Left cardiac atrium (tissue), 4 donors: ENCODE measurements at regions of chr1 and their contacts with region 1.

Region 1: GRCh38 chr1:180851995-180852887 is 60.5 kb upstream of the KIAA1614 start:
- DNase-seq: no peak
- ATAC-seq: no peak

Region 2: GRCh38 chr1:180415985-180416633 is 436.1 kb before region 1 on chr1:
- intact Hi-C with region 1: no loop called
- DNase-seq: no peak
- ATAC-seq: peak in 1 of 2 donors; percentile 34

Region 3: DNA sequence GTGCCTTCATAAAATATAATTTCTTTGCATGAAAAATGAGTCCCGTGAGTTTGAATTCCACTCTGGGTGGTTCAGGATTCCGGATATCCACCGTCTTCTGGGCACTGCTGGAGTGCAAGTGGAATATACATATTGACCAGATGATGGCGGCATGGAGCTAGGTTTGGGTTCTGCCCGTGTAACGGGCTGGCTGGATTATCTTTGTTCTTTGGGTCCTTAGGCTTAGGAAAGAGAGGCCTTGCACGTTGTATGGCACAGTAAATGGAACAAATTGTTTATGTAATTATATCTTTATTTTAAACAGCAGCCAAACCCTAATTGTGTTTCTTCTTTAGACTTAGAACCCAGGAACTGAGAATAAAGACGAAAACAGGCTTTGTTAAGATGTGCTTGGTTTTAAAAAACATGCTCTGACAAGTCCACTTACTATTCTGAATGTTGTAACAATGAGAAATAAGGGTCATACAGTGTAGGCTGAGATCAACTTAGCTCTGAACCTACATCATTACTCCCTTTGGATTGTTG is 336.3 kb before region 1 on chr1:
- intact Hi-C with region 1: loop called in 1 of 2 experiments (anchors 10 kb)
- DNase-seq: peak; percentile 58
- ATAC-seq: peak; percentile 95 to 96

Region 4: GRCh38 chr1:180631766-180632325 is 220.4 kb before region 1 on chr1 and contains the start of gene XPR1:
- intact Hi-C with region 1: loop called in 1 of 2 experiments (anchors 10 kb)
- DNase-seq: peak; percentile 98
- ATAC-seq: peak; percentile 99 to 100
- total RNA-seq, gene XPR1: 20.5 to 25.4 TPM